K562 (cell line): ENCODE measurements at regions of chr13 and their contacts with region 1.

Region 1: GRCh38 chr13:68481130-68481529 is 1251.0 kb upstream of the PCDH9 start:
- DNase-seq: no peak
- ATAC-seq: no peak
- H3K4me3 ChIP-seq: no peak overlapping the region
- H3K27ac ChIP-seq: no peak overlapping the region
- H3K4me1 ChIP-seq: no peaks in the 10 kb centered on the region
- H3K27me3 ChIP-seq: no peaks in the 10 kb centered on the region
- CTCF ChIP-seq: no peak
- EP300 ChIP-seq: no peak
- POLR2A ChIP-seq: no peak
- RAD21 ChIP-seq: no peak

Region 2: GRCh38 chr13:68417801-68418200 is 63.3 kb before region 1 on chr13:
- CTCF ChIA-PET with region 1: no interaction called
- POLR2A ChIA-PET with region 1: no interaction called
- in situ Hi-C with region 1: no loop called
- intact Hi-C with region 1: no loop called
- DNase-seq: no peak
- ATAC-seq: no peak
- H3K4me3 ChIP-seq: no peak overlapping the region
- H3K27ac ChIP-seq: no peak overlapping the region
- H3K4me1 ChIP-seq: no peaks in the 10 kb centered on the region
- H3K27me3 ChIP-seq: no peaks in the 10 kb centered on the region
- CTCF ChIP-seq: no peak
- EP300 ChIP-seq: no peak
- POLR2A ChIP-seq: no peak
- RAD21 ChIP-seq: no peak

Region 3: GRCh38 chr13:68467160-68467559 is 14.0 kb before region 1 on chr13:
- CTCF ChIA-PET with region 1: no interaction called
- POLR2A ChIA-PET with region 1: no interaction called
- in situ Hi-C with region 1: no loop called
- intact Hi-C with region 1: loop called (anchors 1 kb)
- DNase-seq: no peak
- ATAC-seq: no peak
- H3K4me3 ChIP-seq: no peak overlapping the region
- H3K27ac ChIP-seq: no peak overlapping the region
- H3K4me1 ChIP-seq: no peaks in the 10 kb centered on the region
- H3K27me3 ChIP-seq: no peaks in the 10 kb centered on the region
- CTCF ChIP-seq: no peak
- EP300 ChIP-seq: no peak
- POLR2A ChIP-seq: no peak
- RAD21 ChIP-seq: no peak

Region 4: GRCh38 chr13:68535329-68535728 is 54.2 kb after region 1 on chr13:
- CTCF ChIA-PET with region 1: no interaction called
- POLR2A ChIA-PET with region 1: no interaction called
- in situ Hi-C with region 1: no loop called
- intact Hi-C with region 1: no loop called
- DNase-seq: no peak
- ATAC-seq: no peak
- H3K4me3 ChIP-seq: no peak overlapping the region
- H3K27ac ChIP-seq: no peak overlapping the region
- H3K4me1 ChIP-seq: no peaks in the 10 kb centered on the region
- H3K27me3 ChIP-seq: no peaks in the 10 kb centered on the region
- CTCF ChIP-seq: no peak
- EP300 ChIP-seq: no peak
- POLR2A ChIP-seq: no peak
- RAD21 ChIP-seq: no peak